BJ (cell line): ENCODE measurements at regions of chrX and their contacts with region 1.

Region 1: DNA sequence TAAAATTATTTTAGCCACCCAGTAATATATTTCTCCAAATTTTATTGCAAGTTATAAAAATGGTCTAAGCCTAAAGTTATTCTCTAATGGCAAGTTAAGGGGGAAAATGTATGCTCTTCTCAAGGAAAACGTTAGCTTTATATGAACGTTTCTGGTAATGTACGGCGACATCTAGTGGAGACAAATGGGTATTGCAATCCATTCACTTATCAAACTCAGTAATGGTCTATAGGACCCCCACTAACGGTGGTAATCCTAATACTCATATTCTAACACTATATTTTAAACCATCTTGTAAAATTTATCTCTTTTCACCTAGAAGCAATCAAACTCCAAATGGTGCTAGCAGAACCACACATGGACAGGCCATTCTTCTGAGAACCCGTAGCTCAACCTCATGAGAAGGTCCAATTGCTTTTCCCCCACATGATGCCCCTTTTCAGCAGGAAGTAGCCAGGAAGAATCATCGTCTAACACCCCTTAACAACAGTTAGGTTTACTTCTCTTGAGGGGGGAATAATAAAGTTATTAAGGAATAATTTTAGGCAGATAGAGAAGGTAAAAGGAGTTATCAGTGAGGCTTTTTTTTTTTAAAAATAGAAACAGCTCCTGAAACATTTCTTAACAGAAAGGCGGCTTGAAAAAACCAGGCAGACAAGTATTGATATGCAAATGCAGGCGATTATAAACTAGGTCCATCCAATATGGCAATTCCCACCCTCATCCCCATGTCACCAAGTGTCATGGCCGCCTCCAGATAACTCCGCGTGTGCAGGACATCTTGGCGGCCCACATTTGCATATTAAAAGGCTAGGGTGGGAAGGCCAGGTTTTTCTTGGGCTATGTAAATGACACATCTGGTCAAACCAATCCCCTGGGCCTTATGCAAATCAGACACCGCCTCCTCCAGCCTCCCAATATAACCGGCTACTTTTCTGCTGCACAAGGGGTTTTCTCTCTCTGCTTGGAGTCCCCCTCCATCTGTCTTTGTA is 35.0 kb downstream of the NUDT11 start:
- DNase-seq: no peak
- H3K4me3 ChIP-seq: no peak overlapping the region
- H3K27me3 ChIP-seq: no peaks in the 10 kb centered on the region
- CTCF ChIP-seq: peak; percentile 64

Region 2: DNA sequence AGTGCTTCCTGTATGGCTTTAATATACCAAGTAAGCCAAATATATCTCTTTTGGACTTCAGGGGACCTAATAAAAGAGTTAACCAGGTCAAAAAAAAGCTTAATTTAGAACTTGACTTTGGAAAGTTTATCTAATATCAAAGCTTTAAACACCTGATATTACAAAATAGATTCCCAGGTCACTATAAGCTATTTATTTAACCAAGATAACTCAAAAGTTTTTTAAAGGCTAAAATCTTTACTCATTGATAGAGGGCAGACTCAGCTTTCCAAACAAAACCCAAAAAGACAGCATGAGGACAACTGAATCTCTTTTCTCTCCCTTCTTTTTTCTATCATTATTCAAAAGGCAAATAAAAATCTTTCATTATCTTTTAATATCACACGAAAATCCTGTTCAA is 15.6 kb after region 1 on chrX:
- CTCF ChIA-PET with region 1: interaction called, 21 read pairs
- POLR2A ChIA-PET with region 1: no interaction called
- DNase-seq: no peak
- H3K4me3 ChIP-seq: no peak overlapping the region
- H3K27me3 ChIP-seq: no peaks in the 10 kb centered on the region
- CTCF ChIP-seq: no peak

Region 3: GRCh38 chrX:51507551-51507950 is 46.2 kb after region 1 on chrX:
- CTCF ChIA-PET with region 1: no interaction called
- POLR2A ChIA-PET with region 1: no interaction called
- DNase-seq: no peak
- H3K4me3 ChIP-seq: no peak overlapping the region
- H3K27me3 ChIP-seq: no peaks in the 10 kb centered on the region
- CTCF ChIP-seq: no peak

Region 4: DNA sequence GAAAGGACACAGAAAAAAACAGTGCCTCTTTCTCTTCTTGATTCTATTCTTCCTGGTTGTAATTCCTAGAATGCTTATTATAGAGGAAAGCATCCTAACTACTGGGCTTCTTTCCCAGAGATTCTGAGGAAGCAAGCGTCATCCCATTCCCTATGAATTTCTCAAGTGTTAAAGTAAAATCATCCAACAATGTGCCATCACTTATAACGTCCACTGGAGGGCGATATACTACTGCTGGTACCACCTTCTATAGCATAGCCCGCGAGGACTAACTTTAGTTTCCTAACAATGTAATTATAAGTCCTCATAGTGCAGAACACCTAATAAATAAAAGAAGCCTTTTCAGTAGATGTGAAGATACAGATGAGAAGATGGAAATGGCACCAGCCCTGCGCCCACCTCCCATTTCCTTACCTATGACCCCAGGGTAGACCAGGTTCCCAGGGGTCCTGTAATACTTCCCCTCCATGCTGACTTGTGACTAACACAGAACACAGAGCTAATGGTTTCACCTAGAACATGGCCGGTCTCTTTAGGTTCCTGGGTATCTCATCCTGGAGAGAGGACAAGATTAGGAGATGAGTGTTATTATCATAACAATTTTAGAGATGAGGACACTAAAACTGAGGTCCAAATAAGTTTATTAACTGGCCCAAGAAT is 153.1 kb after region 1 on chrX:
- CTCF ChIA-PET with region 1: no interaction called
- POLR2A ChIA-PET with region 1: no interaction called
- DNase-seq: no peak
- H3K4me3 ChIP-seq: no peak overlapping the region
- H3K27me3 ChIP-seq: peaks cover 2% of the 10 kb centered on the region
- CTCF ChIP-seq: peak; percentile 50